Calu3 (cell line): ENCODE measurements at regions of chr17 and their contacts with region 1.

Region 1: GRCh38 chr17:21126645-21127510 is at the start of gene DHRS7B:
- DNase-seq: peak; percentile 94
- H3K4me3 Mint-ChIP-seq: peak within 1 kb of the TSS; percentile 93
- H3K27ac Mint-ChIP-seq: peak within 1 kb of the TSS; percentile 98
- H3K4me1 Mint-ChIP-seq: peaks cover 18% of the 10 kb centered on the region
- H3K27me3 Mint-ChIP-seq: no peaks in the 10 kb centered on the region
- CTCF ChIP-seq: no peak
- total RNA-seq, gene DHRS7B: 15.3 and 17.7 TPM in 2 replicates

Region 2: GRCh38 chr17:21214015-21214776 is 87.3 kb after region 1 on chr17 and contains the start of gene TMEM11:
- CTCF ChIA-PET with region 1: no interaction called
- intact Hi-C with region 1: loop called (anchors 10 kb)
- DNase-seq: peak; percentile 92
- H3K4me3 Mint-ChIP-seq: peak within 1 kb of the TSS; percentile 83
- H3K27ac Mint-ChIP-seq: peak within 1 kb of the TSS; percentile 77
- H3K4me1 Mint-ChIP-seq: peaks cover 20% of the 10 kb centered on the region
- H3K27me3 Mint-ChIP-seq: no peaks in the 10 kb centered on the region
- CTCF ChIP-seq: no peak
- total RNA-seq, gene TMEM11: 18.9 and 20.3 TPM in 2 replicates

Region 3: DNA sequence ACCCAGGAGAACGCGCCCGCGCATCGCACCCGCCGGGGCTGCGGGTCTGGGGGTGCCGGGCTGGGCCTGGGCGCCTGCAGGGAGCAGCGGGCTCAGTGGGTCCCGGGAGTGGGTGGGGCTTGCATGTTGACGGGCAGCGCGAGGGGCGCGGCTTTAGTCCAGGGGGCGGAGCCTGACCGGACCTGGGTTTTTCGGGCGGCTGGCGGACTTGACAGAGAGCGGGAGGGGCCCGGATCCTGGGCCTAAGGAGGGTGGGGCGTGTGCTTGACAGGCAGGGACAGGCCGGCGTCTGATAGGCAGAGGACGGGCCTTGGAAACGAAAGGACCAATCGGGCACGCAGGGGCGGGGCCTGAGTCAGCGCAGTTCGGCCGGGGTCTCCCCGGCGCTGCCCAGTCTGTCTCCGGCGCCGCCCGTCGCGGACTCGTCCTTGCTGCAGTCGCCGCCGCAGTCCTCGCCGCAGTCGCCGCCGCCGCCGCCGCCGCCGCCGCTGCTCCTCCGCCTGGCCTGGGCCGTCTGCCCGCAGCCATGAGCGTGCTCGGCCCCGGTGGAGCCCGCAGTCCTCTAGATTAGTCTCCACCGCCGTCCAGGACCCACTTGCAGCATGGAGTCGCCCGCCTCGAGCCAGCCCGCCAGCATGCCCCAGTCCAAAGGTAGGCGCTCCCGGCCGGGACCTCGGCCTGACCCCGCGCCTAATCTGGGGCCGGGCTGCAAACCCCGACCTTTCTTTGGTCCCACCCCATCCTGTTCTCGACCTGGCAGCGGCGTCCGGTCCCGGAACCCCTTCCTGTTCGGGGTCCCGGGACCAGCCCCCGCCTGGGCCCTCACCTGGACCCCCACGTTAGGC is 157.7 kb after region 1 on chr17 and contains the start of gene MAP2K3:
- CTCF ChIA-PET with region 1: no interaction called
- intact Hi-C with region 1: loop called (anchors 5 kb)
- DNase-seq: peak; percentile 96
- H3K4me3 Mint-ChIP-seq: peak within 1 kb of the TSS; percentile 89
- H3K27ac Mint-ChIP-seq: peak within 1 kb of the TSS; percentile 98
- H3K4me1 Mint-ChIP-seq: peaks cover 36% of the 10 kb centered on the region
- H3K27me3 Mint-ChIP-seq: no peaks in the 10 kb centered on the region
- CTCF ChIP-seq: no peak
- total RNA-seq, gene MAP2K3: 93.5 and 111 TPM in 2 replicates

Region 4: GRCh38 chr17:21511363-21512198 is 384.7 kb after region 1 on chr17:
- CTCF ChIA-PET with region 1: no interaction called
- intact Hi-C with region 1: loop called (anchors 10 kb)
- DNase-seq: peak; percentile 74
- H3K4me3 Mint-ChIP-seq: peak overlapping the region; percentile 64
- H3K27ac Mint-ChIP-seq: no peak overlapping the region
- H3K4me1 Mint-ChIP-seq: peaks cover 8% of the 10 kb centered on the region
- H3K27me3 Mint-ChIP-seq: peaks cover 75% of the 10 kb centered on the region
- CTCF ChIP-seq: peak; percentile 48